ENCODE measurements at regions of chr2 and their contacts with region 1.

Region 1: DNA sequence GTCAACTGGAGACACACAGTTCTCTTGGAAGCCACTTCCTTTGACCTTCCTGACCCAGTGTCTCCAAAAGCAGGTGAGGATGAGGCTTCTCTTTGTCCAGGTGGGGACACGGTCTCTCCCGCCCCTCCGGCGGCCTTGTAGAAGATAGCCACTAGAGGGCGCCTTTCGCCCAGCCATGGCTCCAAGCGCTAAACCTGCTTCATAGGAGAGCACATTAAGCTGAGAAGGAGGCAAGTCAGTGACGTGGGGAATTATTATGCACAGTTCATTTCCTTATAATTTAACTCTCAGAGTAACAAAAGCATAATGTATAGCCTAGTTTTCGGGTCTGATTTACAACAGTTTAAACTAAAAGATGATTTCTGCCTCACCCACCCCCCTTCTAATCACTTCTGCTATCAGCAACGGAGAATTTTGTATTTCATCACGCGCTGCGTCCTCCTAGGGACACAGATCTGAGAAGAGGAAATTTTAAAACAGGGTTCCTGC is 208.7 kb downstream of the ICOS start:
- DNase-seq: peak; percentile 81
- H3K4me3 Mint-ChIP-seq: peak overlapping the region; percentile 69
- H3K27ac Mint-ChIP-seq: no peak overlapping the region
- H3K4me1 Mint-ChIP-seq: peaks cover 5% of the 10 kb centered on the region
- H3K27me3 Mint-ChIP-seq: peaks cover 57% of the 10 kb centered on the region
- CTCF ChIP-seq: peak; percentile 90

Region 2: GRCh38 chr2:204177977-204178540 is 32.8 kb after region 1 on chr2:
- CTCF ChIA-PET with region 1: interaction called, 7 read pairs
- POLR2A ChIA-PET with region 1: no interaction called
- intact Hi-C with region 1: loop called (anchors 1 kb)
- DNase-seq: peak; percentile 60
- H3K4me3 Mint-ChIP-seq: no peak overlapping the region
- H3K27ac Mint-ChIP-seq: no peak overlapping the region
- H3K4me1 Mint-ChIP-seq: no peaks in the 10 kb centered on the region
- H3K27me3 Mint-ChIP-seq: peaks cover 23% of the 10 kb centered on the region
- CTCF ChIP-seq: peak; percentile 35

Region 3: GRCh38 chr2:205808486-205809121 is 1663.3 kb after region 1 on chr2:
- CTCF ChIA-PET with region 1: no interaction called
- POLR2A ChIA-PET with region 1: no interaction called
- intact Hi-C with region 1: loop called (anchors 1 kb)
- DNase-seq: peak; percentile 35
- H3K4me3 Mint-ChIP-seq: no peak overlapping the region
- H3K27ac Mint-ChIP-seq: no peak overlapping the region
- H3K4me1 Mint-ChIP-seq: peaks cover 5% of the 10 kb centered on the region
- H3K27me3 Mint-ChIP-seq: no peaks in the 10 kb centered on the region
- CTCF ChIP-seq: no peak

Measured in MCF 10A (cell line).